ENCODE measurements at regions of chr2 and their contacts with region 1.

Region 1: GRCh38 chr2:24297663-24298062 is 62.7 kb downstream of the ITSN2 start:
- DNase-seq: no peak
- ATAC-seq: no peak

Region 2: DNA sequence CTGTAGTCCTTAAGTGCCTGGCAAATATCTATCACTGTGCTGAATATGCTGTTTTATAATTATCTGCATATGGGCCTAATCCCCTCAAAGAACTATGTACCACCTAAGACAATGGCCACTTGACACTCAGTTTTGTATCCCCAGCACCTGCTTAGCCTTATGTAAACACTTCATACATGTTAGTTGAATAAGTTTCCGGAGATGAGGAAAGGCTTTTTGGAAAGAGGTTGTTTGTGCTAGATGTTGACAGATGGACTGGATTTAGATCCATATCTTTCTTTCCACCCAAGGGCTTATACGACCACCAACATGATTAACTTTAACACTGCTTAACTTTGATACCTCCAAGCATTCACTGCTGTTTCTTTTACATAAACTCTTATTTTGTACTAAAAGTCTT is 59.5 kb before region 1 on chr2:
- intact Hi-C with region 1: no loop called
- DNase-seq: no peak
- ATAC-seq: no peak

Region 3: DNA sequence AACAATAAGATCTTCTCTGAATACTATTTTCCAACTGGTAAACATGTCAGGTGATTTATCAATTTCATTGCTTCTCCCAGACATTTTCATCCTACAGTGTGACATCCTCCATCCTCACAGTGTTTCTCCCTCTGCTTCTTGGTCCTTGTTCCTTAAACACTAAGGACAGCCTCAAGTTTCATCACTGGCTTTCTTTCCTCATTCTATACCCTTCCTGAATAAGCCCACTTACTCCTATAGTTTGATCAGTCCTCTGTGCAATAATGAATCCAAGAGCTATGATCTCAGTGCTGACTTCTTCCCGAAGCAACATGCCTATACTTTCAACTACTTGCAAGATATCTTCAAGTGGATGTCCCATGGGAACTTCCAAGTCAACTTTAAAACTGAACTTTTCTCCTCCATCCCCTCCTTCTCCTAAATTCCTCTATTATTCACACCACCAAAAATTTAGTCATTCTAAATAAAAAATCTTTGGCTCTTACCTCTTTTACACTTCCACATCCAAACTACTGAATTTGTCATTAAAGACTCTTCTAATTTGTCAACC is 35.2 kb before region 1 on chr2:
- intact Hi-C with region 1: loop called (anchors 5 kb)
- DNase-seq: no peak
- ATAC-seq: no peak

Region 4: DNA sequence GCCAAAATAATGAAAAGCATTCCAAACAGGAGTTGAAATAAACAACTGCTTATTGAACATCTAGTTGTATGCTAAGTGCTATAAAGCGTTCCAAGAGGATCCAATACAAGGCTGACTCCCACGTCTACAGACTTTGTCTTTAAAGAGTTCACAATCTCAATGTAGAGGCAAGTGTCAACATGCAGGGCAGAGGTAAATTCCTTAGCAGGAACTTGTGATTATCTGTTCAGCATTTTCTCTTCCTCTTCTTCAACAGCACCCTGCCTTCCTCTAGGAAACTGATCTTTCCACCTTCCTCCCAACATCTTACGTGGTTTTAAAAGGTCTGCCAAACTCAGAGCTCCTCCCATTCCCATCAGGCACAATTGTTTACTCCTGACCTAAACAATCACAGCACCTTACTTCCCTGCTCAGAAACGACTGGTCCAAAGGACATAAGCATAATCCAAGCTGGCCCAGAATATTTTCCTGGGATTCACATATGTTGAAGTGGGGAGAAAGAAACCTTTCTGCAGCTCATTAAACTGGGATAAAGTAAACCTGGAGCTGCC is 21.2 kb before region 1 on chr2:
- intact Hi-C with region 1: no loop called
- DNase-seq: no peak
- ATAC-seq: no peak

Measured in Right ventricle myocardium inferior (tissue), 1 donor.